ENCODE measurements at regions of chr17 and their contacts with region 1.

Region 1: GRCh38 chr17:40032322-40033320 is 17.4 kb downstream of the CSF3 start:
- DNase-seq: peak; percentile 60 to 85 (median 73)
- ATAC-seq: peak; percentile 70 to 86 (median 84)
- H3K4me3 ChIP-seq: no peak overlapping the region
- H3K27ac ChIP-seq: peak overlapping the region in 9 of 12 donors; percentile 23 to 70 (median 51)
- H3K4me1 ChIP-seq: peaks cover 0 to 20% (median 5%) of the 10 kb centered on the region in 12 donors
- H3K27me3 ChIP-seq: no peaks in the 10 kb centered on the region
- CTCF ChIP-seq: no peak
- POLR2A ChIP-seq: no peak

Region 2: GRCh38 chr17:40168262-40168832 is 135.7 kb after region 1 on chr17:
- intact Hi-C with region 1: loop called in 3 of 10 experiments (anchors 5 to 10 kb)
- DNase-seq: peak in 1 of 5 donors; percentile 32
- ATAC-seq: peak; percentile 32 to 69 (median 59)
- H3K4me3 ChIP-seq: no peak overlapping the region
- H3K27ac ChIP-seq: peak overlapping the region in 7 of 12 donors; percentile 8 to 63 (median 23)
- H3K4me1 ChIP-seq: peaks cover 0 to 9% (median 4%) of the 10 kb centered on the region in 12 donors
- H3K27me3 ChIP-seq: no peaks in the 10 kb centered on the region
- CTCF ChIP-seq: peak; percentile 67 to 86 (median 80)
- POLR2A ChIP-seq: no peak

Region 3: DNA sequence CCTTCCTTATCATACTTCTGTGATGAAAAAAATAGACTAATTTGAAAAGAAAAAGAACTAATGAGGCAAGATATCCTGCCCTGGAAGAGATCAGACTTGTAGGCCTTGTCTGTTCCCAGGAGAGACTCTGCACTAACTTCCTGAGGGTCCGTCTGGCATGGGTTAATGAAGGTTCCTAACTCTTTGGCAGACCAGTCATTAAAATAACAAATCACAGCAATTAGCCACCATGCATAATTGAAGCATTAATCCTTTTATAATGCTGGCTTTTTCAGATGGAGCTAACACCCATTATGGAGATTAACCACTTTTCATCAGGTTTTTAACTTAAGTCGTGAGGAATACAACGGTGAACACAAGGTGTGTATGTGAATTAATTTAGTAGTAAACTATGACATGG is 800.2 kb after region 1 on chr17:
- intact Hi-C with region 1: no loop called
- DNase-seq: no peak
- ATAC-seq: no peak
- H3K4me3 ChIP-seq: no peak overlapping the region
- H3K27ac ChIP-seq: peak overlapping the region in 3 of 12 donors; percentile 7 to 37 (median 21)
- H3K4me1 ChIP-seq: peaks cover 0 to 21% (median 5%) of the 10 kb centered on the region in 12 donors
- H3K27me3 ChIP-seq: no peaks in the 10 kb centered on the region
- CTCF ChIP-seq: no peak
- POLR2A ChIP-seq: no peak

Measured in heart left ventricle (tissue), 16 donors.